ENCODE measurements at regions of chr9 and their contacts with region 1.

Region 1: GRCh38 chr9:129482521-129483414 is 138.1 kb downstream of the C9orf50 start:
- DNase-seq: peak; percentile 48
- H3K4me3 ChIP-seq: peak overlapping the region; percentile 20; the same call in 1 of the 2 replicates
- H3K27me3 ChIP-seq: no peaks in the 10 kb centered on the region
- CTCF ChIP-seq: peak; percentile 19; the same call in 1 of the 2 replicates

Region 2: DNA sequence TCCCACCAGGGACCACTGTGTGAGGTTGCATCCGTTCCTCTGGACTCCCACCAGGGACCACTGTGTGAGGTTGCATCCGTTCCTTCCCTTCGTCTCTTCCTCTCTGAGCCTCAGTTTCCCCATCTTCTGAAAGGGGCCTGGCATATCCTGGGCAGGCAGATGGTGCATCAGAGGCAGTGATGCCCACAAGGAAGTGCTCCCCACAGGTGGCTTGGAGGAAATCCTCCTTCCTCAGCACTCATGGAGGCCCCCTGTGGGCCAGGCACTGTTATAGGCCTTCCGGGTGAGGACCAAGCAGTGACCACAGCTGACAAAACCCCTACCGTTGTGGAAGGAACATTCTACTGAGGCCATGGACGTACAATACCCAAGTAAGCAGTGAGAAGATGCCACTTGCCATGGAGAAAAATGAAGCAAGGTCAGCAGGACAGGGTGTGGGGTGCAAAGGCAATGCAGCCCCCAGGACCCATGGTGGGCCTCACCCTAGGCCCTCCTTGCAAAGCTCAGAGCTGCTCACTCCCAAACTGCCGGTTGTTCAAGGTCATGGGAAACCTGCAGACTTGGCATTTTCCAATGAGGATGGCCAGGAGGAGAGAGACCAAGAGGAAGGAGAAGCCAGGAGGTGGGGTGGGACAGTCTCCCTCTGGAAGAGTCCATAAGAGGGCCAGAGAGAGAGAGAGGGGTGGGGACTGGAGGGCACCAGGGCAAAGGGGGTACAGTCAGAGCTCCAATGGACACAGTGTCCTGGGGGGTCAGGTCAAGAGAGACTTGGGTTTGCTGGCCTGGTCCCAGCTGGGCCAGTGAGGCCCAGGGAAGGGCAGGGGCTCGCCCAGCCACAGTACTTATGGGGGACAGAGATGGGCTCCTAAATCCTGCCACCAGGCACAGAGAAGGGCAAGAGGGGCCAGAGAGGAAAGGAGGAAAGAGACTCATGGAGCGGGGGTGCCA is 87.0 kb after region 1 on chr9:
- CTCF ChIA-PET with region 1: interaction called, 10 read pairs
- POLR2A ChIA-PET with region 1: no interaction called
- DNase-seq: no peak
- H3K4me3 ChIP-seq: no peak overlapping the region
- H3K27me3 ChIP-seq: no peaks in the 10 kb centered on the region
- CTCF ChIP-seq: peak; percentile 47

Measured in BJ (cell line).